Left cardiac atrium (tissue), 4 donors: ENCODE measurements at regions of chr9 and their contacts with region 1.

Region 1: GRCh38 chr9:14212077-14212476 is 101.9 kb downstream of the NFIB start:
- DNase-seq: no peak
- ATAC-seq: peak in 1 of 2 donors; percentile 25

Region 2: GRCh38 chr9:14156046-14156445 is 56.0 kb before region 1 on chr9:
- intact Hi-C with region 1: loop called in 1 of 2 experiments (anchors 10 kb)
- DNase-seq: no peak
- ATAC-seq: no peak